Psoas muscle (tissue), 8 donors: ENCODE measurements at regions of chr15 and their contacts with region 1.

Region 1: DNA sequence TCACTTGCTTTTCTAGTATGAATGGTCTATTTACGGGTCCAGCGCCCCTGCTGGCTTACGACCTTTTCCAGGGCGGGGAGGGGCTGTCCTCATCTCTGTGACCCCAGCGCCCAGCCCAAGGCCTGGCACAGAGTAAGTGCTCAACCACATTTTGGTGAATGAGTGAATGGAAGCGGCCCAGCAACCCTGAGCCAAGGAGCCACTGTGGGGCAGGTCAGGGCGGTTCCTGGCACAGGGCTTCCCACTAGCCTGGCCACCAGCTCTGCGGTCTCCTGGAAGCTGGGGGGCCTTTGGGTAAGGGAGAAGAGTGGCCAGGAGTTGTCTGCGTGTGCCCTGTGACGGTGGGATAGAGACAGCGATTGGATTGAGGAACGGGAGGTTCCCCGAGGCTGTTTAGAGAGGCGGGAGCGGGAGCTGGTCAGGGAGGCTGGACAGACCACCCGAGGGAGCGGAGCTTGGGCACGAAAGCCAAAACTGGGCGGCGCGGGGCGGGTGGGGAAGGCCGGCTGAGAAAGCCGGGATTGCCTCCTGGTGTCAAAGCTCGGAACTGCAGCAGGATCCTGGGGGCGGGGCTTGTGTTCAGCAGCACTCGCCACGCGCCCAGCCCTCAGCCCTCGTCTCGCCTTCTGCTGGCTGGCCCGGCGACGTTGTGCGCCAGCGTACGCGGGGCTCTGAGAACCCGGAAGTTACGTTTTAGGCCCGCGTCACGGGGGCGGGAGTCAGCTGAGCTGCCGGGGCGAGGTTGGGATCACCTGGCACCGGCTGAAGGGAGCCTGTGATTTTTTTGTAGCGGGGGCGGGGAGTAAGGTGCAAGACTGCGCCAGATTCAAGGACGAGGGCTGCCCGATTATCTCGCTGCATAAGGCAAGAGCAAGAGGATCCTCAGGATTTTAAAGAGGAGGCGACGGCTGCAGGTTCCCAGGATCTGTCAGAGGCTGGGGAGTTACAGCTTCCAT is at the start of gene VPS18:
- DNase-seq: peak; percentile 99
- ATAC-seq: peak; percentile 97 to 98 (median 98)
- H3K4me3 ChIP-seq: peak within 1 kb of the TSS; percentile 98
- H3K27ac ChIP-seq: peak within 1 kb of the TSS; percentile 88
- H3K4me1 ChIP-seq: peaks cover 16% of the 10 kb centered on the region
- H3K27me3 ChIP-seq: no peaks in the 10 kb centered on the region
- CTCF ChIP-seq: peak; percentile 99
- total RNA-seq, gene VPS18: 8.1 to 20.5 (median 16.3) TPM

Region 2: DNA sequence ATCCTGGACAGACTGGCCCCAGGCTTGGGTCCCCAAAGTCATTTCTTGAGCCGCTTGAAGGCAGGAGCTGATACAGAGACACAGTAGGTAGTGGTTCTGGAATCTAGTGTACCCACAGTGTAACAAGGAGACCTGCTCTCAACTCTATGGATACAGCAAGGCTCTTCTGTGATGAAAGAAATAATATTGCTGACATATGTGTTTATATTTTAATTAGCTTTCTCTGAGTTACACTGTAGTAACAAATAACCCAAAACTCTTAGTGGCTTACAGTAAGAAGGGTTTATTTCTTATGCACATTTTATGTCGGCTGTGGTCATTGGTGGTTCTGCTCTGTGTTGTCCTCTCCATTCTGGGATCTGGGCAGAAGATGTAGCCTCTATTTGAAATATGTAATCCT is 377.7 kb before region 1 on chr15:
- intact Hi-C with region 1: loop called in 1 of 2 experiments (anchors 5 kb)
- DNase-seq: no peak
- ATAC-seq: no peak
- H3K4me3 ChIP-seq: no peak overlapping the region
- H3K27ac ChIP-seq: no peak overlapping the region
- H3K4me1 ChIP-seq: peaks cover 3% of the 10 kb centered on the region
- H3K27me3 ChIP-seq: no peaks in the 10 kb centered on the region
- CTCF ChIP-seq: no peak

Region 3: DNA sequence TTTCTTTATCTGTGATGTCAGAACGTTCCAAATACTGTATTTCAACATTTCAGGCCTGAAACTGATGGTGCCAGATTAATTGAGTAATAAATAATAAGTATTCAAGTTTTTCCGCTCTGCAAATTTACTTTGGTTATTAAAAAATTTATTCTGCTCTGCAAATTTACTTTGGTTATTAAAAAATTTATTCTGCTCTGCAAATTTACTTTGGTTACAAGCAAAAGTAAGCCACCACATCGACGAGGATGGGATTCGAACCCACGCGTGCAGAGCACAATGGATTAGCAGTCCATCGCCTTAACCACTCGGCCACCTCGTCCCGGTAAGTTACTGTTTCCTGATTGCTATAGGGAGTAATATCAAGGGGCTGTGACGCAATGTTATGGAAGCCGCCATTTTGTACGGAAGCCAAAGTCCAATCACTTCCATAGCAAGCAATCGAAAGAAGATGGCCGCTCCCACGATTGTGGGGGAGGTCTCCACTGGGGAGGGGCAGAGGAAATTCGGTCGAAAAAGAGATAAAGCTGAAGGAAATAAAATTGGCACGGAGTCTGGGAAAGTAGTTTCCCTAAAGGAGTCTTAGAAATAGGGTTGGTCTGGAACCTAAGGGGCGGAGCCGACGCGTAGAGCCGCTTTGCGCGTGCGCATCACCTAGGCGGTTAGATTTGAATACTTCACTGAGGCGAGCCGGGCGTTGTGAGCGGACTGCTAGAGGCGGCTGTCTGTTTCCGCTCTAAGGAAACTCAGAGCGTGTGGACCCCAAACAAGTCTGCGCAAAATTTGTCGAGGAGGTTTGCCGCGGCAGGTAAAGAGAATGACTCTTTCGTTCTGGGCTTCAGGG is 300.2 kb before region 1 on chr15 and contains the start of gene KNL1:
- intact Hi-C with region 1: loop called in 1 of 2 experiments (anchors 5 kb)
- DNase-seq: peak; percentile 84 to 92
- ATAC-seq: peak; percentile 92 to 96 (median 94)
- H3K4me3 ChIP-seq: peak within 1 kb of the TSS; percentile 73
- H3K27ac ChIP-seq: peak within 1 kb of the TSS; percentile 91
- H3K4me1 ChIP-seq: no peaks in the 10 kb centered on the region
- H3K27me3 ChIP-seq: peaks cover 0 to 4% (median 0%) of the 10 kb centered on the region in 3 donors
- CTCF ChIP-seq: no peak
- total RNA-seq, gene KNL1: 0.04 to 0.50 (median 0.49) TPM in 3 of 4 donors, not detected in the other

Region 4: GRCh38 chr15:40684381-40684780 is 209.6 kb before region 1 on chr15:
- intact Hi-C with region 1: loop called (anchors 2 to 5 kb)
- DNase-seq: no peak
- ATAC-seq: no peak
- H3K4me3 ChIP-seq: no peak overlapping the region
- H3K27ac ChIP-seq: no peak overlapping the region
- H3K4me1 ChIP-seq: peaks cover 6% of the 10 kb centered on the region
- H3K27me3 ChIP-seq: no peaks in the 10 kb centered on the region
- CTCF ChIP-seq: no peak

Region 5: GRCh38 chr15:40754883-40755811 is 138.9 kb before region 1 on chr15 and contains the start of gene RMDN3:
- intact Hi-C with region 1: loop called in 1 of 2 experiments (anchors 5 kb)
- DNase-seq: peak; percentile 94 to 96
- ATAC-seq: peak; percentile 98 to 100 (median 99)
- H3K4me3 ChIP-seq: peak within 1 kb of the TSS; percentile 91
- H3K27ac ChIP-seq: peak within 1 kb of the TSS; percentile 77
- H3K4me1 ChIP-seq: peaks cover 15% of the 10 kb centered on the region
- H3K27me3 ChIP-seq: no peaks in the 10 kb centered on the region
- CTCF ChIP-seq: no peak
- total RNA-seq, gene RMDN3: 17.1 to 20.1 (median 18.6) TPM

Region 6: GRCh38 chr15:40857601-40858341 is 36.2 kb before region 1 on chr15:
- intact Hi-C with region 1: loop called (anchors 1 to 2 kb)
- DNase-seq: peak; percentile 72 to 81
- ATAC-seq: peak; percentile 89 to 96 (median 93)
- H3K4me3 ChIP-seq: no peak overlapping the region
- H3K27ac ChIP-seq: no peak overlapping the region
- H3K4me1 ChIP-seq: peaks cover 6% of the 10 kb centered on the region
- H3K27me3 ChIP-seq: no peaks in the 10 kb centered on the region
- CTCF ChIP-seq: peak; percentile 92